SK-N-SH (cell line): ENCODE measurements at regions of chr16 and their contacts with region 1.

Region 1: GRCh38 chr16:87636072-87636684 is 33.9 kb downstream of the JPH3 start:
- DNase-seq: peak; percentile 93
- H3K4me3 ChIP-seq: peak overlapping the region; percentile 35 to 50; a peak in 2 of 4 replicates
- H3K27ac ChIP-seq: no peak overlapping the region
- H3K4me1 ChIP-seq: peaks cover 0 to 15% of the 10 kb centered on the region in 2 experiments; a peak in 1 of 4 replicates
- H3K27me3 ChIP-seq: peaks cover 16% of the 10 kb centered on the region; the same call in 1 of the 2 replicates
- CTCF ChIP-seq: peak; percentile 67
- EP300 ChIP-seq: no peak
- RAD21 ChIP-seq: peak; percentile 83

Region 2: GRCh38 chr16:87391950-87392822 is 244.0 kb before region 1 on chr16 and contains the start of gene MAP1LC3B:
- CTCF ChIA-PET with region 1: interaction called, 66 read pairs
- POLR2A ChIA-PET with region 1: no interaction called
- DNase-seq: peak; percentile 98
- H3K4me3 ChIP-seq: peak within 1 kb of the TSS; percentile 78 to 79
- H3K27ac ChIP-seq: peak within 1 kb of the TSS; percentile 74 to 93
- H3K4me1 ChIP-seq: peaks cover 19 to 27% of the 10 kb centered on the region in 2 experiments
- H3K27me3 ChIP-seq: no peaks in the 10 kb centered on the region
- CTCF ChIP-seq: no peak
- EP300 ChIP-seq: no peak
- RAD21 ChIP-seq: no peak
- polyA plus RNA-seq, gene MAP1LC3B: 33.7 and 36.9 TPM in 2 replicates

Region 3: GRCh38 chr16:87435372-87436224 is 200.6 kb before region 1 on chr16:
- CTCF ChIA-PET with region 1: interaction called, 10 read pairs
- POLR2A ChIA-PET with region 1: no interaction called
- DNase-seq: peak; percentile 41
- H3K4me3 ChIP-seq: peak overlapping the region; percentile 25 to 63; a peak in 3 of 4 replicates
- H3K27ac ChIP-seq: peak overlapping the region; percentile 71 to 93
- H3K4me1 ChIP-seq: peaks cover 18 to 37% of the 10 kb centered on the region in 2 experiments
- H3K27me3 ChIP-seq: no peaks in the 10 kb centered on the region
- CTCF ChIP-seq: no peak
- EP300 ChIP-seq: no peak; a peak in 1 of 4 replicates
- RAD21 ChIP-seq: no peak

Region 4: DNA sequence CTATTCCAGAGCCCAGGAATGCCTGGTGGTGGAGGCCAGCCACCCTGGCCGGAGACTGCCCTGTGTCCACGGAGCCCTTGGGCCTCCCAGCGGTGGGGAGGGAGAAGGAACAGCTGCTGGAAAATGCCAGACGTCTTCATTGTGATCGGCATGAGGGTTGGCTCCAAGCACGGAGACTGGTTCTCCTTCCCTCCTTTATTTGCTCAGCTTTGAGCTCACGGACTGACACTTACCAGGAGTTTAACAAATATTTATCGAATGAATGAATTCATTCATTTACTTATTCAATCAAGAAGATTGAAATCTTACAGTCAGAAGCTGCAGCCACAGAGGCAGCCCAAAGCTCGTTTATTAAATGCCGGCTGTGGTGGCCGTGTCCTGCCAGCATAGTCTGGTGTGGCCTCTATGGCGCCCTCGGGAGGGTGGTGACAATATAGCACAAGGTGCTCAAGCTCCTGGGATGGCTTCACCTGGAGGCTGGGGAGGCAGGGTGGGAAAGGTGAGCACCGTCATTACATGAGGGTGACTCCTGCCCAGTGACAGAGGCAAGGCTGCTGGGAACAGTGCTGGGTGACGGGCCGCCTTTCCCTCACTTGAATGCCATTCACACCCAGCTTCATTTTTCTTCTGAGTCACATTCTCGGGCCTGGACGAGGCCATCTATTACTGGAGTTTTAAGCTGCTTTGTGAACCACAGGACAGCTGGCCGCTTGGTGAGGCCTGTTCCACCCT is 64.9 kb before region 1 on chr16:
- CTCF ChIA-PET with region 1: interaction called, 33 read pairs
- POLR2A ChIA-PET with region 1: no interaction called
- DNase-seq: peak; percentile 71
- H3K4me3 ChIP-seq: no peak overlapping the region
- H3K27ac ChIP-seq: no peak overlapping the region; a peak in 1 of 4 replicates
- H3K4me1 ChIP-seq: peaks cover 0 to 21% of the 10 kb centered on the region in 2 experiments; a peak in 1 of 4 replicates
- H3K27me3 ChIP-seq: no peaks in the 10 kb centered on the region; the same call in 1 of the 2 replicates
- CTCF ChIP-seq: peak; percentile 37
- EP300 ChIP-seq: no peak
- RAD21 ChIP-seq: peak; percentile 40

Region 5: DNA sequence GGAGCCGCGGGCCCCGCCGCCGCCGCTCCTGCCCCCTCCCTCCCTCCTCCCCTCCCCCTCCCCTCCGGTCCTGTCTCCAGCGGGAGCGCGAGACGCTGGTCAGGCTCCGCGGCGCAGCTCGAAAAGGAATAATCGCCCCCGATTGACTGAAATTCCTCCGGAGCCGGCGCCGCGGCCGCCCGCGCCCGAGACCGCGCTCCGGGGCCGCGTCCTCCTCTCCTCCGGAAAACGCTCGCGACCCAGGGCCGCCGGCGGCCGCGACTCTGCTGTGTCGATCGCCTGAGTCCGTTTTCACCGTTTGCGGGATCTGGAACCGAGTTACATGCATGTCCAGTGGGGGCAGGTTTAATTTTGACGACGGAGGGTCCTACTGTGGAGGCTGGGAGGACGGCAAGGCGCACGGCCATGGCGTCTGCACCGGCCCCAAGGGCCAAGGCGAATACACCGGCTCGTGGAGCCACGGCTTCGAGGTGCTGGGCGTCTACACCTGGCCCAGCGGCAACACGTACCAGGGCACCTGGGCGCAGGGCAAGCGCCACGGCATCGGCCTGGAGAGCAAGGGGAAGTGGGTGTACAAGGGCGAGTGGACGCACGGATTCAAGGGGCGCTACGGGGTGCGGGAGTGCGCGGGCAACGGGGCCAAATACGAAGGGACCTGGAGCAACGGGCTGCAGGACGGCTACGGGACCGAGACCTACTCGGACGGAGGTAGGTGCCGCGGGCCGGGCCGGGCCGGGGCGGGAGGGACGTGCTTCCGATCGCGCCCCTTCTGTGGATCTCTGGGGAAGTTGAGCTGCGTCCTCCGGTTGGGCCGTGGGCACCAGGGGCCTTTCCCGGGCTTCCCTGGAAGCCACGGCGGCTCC is 33.1 kb before region 1 on chr16:
- CTCF ChIA-PET with region 1: interaction called, 62 read pairs
- POLR2A ChIA-PET with region 1: no interaction called
- DNase-seq: peak; percentile 83
- H3K4me3 ChIP-seq: peak overlapping the region in 1 of 2 experiments; percentile 53; a peak in 2 of 4 replicates
- H3K27ac ChIP-seq: peak overlapping the region in 1 of 2 experiments; percentile 19; a peak in 1 of 4 replicates
- H3K4me1 ChIP-seq: peaks cover 0 to 25% of the 10 kb centered on the region in 2 experiments; a peak in 1 of 4 replicates
- H3K27me3 ChIP-seq: peaks cover 69% of the 10 kb centered on the region
- CTCF ChIP-seq: no peak
- EP300 ChIP-seq: no peak
- RAD21 ChIP-seq: no peak

Region 6: GRCh38 chr16:87653234-87653633 is 17.1 kb after region 1 on chr16:
- CTCF ChIA-PET with region 1: interaction called, 68 read pairs
- POLR2A ChIA-PET with region 1: no interaction called
- DNase-seq: peak; percentile 66
- H3K4me3 ChIP-seq: no peak overlapping the region
- H3K27ac ChIP-seq: no peak overlapping the region; a peak in 1 of 4 replicates
- H3K4me1 ChIP-seq: peaks cover 0 to 7% of the 10 kb centered on the region in 2 experiments; a peak in 1 of 4 replicates
- H3K27me3 ChIP-seq: peaks cover 6% of the 10 kb centered on the region
- CTCF ChIP-seq: peak; percentile 51
- EP300 ChIP-seq: no peak
- RAD21 ChIP-seq: peak; percentile 14; the same call in 1 of the 2 replicates

Region 7: DNA sequence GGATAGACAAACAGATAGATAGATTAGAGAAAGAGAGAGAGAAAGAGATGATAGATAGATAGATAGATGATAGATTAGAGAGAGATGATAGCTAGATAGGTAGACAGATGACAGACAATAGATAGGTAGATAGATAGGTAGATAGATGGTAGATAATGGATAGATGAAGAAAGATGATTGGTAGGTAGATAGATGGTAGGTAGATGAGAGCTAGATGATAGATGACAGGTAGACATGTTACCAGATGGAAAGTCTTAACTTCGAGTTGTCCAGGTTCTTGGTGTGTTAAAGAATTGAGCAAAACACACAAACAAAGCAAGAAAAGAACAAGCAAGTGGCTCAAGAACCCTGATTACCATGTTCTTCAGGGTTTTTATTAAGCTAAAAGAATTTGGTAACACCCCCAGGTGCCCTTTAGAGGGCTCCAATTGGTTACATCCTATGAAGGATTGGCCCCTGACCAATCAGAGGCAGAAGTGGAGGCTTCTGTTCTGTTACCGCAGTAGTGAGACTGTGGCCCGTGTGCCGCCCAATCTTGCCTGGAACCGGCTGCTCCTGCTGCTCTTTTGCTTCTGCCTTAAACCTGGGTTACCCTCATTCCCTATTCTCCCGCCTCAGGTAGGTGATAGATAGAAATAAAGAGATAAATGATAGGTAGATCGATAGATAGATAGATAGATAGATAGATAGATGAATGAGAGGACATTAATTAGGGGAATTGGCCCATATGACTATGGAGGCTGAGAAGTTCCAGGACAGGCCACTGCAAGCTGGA is 303.3 kb after region 1 on chr16:
- CTCF ChIA-PET with region 1: no interaction called
- POLR2A ChIA-PET with region 1: no interaction called
- DNase-seq: no peak
- H3K4me3 ChIP-seq: no peak overlapping the region
- H3K27ac ChIP-seq: no peak overlapping the region
- H3K4me1 ChIP-seq: no peaks in the 10 kb centered on the region
- H3K27me3 ChIP-seq: no peaks in the 10 kb centered on the region
- CTCF ChIP-seq: no peak
- EP300 ChIP-seq: no peak
- RAD21 ChIP-seq: no peak